ENCODE measurements at regions of chr2 and their contacts with region 1.

Region 1: GRCh38 chr2:156017341-156017885 is 315.1 kb downstream of the NR4A2 start:
- DNase-seq: no peak
- ATAC-seq: no peak
- H3K4me3 ChIP-seq: no peak overlapping the region
- H3K27ac ChIP-seq: no peak overlapping the region
- H3K4me1 ChIP-seq: no peaks in the 10 kb centered on the region
- H3K27me3 ChIP-seq: no peaks in the 10 kb centered on the region
- CTCF ChIP-seq: no peak

Region 2: GRCh38 chr2:154978710-154979109 is 1038.7 kb before region 1 on chr2:
- CTCF ChIA-PET with region 1: no interaction called
- POLR2A ChIA-PET with region 1: no interaction called
- in situ Hi-C with region 1: no loop called
- intact Hi-C with region 1: no loop called
- DNase-seq: no peak
- ATAC-seq: no peak
- H3K4me3 ChIP-seq: no peak overlapping the region
- H3K27ac ChIP-seq: no peak overlapping the region
- H3K4me1 ChIP-seq: no peaks in the 10 kb centered on the region
- H3K27me3 ChIP-seq: no peaks in the 10 kb centered on the region
- CTCF ChIP-seq: no peak

Region 3: DNA sequence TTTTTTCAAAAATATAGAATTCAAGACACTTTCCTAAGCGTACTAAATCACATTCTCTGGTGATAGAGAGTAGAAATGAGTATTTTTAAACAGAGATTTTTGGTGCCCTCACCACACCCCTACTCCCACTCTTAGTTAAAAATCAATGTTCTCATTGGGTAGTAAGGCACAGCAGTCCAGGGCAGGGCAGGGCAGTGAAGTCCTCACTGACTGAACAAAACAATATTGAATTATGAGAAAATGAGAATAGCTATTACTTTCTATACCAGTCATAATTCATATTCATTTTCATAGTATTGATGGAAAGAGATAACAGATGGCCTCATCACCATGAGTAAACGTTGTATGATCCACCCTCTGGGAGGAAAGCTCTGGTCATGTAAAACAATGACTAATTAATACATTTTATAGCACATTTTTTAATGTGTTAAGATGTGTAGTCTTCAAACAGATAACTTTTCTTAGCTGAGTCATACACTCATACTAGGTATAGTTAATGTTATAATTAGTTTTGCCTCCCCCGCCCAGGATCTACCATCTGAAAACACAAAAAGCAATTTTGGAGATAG is 632.8 kb before region 1 on chr2:
- CTCF ChIA-PET with region 1: no interaction called
- POLR2A ChIA-PET with region 1: no interaction called
- in situ Hi-C with region 1: no loop called
- intact Hi-C with region 1: loop called (anchors 5 kb)
- DNase-seq: no peak
- ATAC-seq: no peak
- H3K4me3 ChIP-seq: no peak overlapping the region
- H3K27ac ChIP-seq: no peak overlapping the region
- H3K4me1 ChIP-seq: no peaks in the 10 kb centered on the region
- H3K27me3 ChIP-seq: no peaks in the 10 kb centered on the region
- CTCF ChIP-seq: no peak